Activated CD4-positive, alpha-beta T cell treated with anti-CD3 and anti-CD28 coated beads for 36 hours (primary cell): ENCODE measurements at regions of chr4 and their contacts with region 1.

Region 1: DNA sequence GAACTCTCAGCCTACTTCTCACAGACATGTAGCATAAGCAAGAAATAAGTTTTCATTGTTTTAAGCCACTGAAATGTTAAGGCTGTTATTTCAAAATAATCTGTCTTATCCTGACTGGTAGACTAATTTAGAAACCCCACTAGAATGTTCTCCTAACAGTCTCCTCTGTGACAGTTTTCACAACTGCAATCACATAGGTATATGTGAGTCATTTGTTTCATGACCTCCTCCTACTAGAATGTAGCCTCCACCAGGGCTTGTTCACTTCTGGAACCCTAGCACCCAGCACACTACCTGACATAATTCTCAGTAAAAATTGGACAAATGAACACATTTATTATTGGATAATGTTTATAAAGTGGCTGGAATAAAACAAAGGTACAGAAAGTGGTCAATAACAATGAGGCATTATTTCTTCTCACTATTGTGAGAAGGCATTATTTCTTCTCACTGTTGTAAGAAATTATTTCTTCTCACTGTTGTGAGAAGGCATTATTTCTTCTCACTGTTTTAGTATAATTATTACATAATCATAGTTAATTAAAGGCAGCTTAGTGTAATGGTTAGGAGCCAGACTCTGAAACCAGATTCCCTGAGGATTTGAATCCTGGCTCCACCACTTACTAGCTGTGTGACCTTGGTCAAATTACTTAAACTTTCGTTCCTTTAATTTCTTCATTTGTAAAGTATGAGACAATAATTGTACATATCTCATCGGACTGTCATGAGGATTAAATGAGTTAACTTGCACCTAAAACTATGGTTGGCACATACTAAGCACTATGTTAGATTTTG is 251.5 kb downstream of the RASL11B start:
- DNase-seq: peak; percentile 38
- ATAC-seq: peak; percentile 99
- H3K4me3 Mint-ChIP-seq: no peak overlapping the region
- H3K27ac Mint-ChIP-seq: peak overlapping the region; percentile 91
- H3K4me1 Mint-ChIP-seq: peaks cover 33% of the 10 kb centered on the region
- H3K27me3 Mint-ChIP-seq: no peaks in the 10 kb centered on the region

Region 2: DNA sequence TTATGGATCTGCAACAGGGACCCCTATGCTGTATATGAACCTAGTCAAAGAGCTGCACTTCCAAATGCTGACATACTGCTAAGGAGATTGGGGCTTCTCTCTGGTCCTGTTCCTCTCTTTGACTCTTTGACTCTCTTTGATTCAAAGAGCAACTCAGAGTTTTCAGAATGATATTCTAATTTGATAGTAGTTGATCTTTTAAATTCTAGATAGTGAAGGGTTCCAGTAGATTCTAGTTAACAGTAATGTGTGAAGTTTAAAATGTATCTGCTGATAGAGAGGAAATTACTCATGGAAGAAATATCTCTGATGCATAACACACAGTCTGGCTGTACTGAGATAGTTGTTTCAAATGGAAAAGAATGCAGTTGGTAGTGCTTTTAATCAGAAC is 12.4 kb before region 1 on chr4:
- CTCF ChIA-PET with region 1: no interaction called
- POLR2A ChIA-PET with region 1: no interaction called
- intact Hi-C with region 1: loop called in 1 of 2 experiments (anchors 1 kb)
- DNase-seq: no peak
- ATAC-seq: peak; percentile 95
- H3K4me3 Mint-ChIP-seq: no peak overlapping the region
- H3K27ac Mint-ChIP-seq: peak overlapping the region; percentile 74
- H3K4me1 Mint-ChIP-seq: peaks cover 22% of the 10 kb centered on the region
- H3K27me3 Mint-ChIP-seq: no peaks in the 10 kb centered on the region

Region 3: DNA sequence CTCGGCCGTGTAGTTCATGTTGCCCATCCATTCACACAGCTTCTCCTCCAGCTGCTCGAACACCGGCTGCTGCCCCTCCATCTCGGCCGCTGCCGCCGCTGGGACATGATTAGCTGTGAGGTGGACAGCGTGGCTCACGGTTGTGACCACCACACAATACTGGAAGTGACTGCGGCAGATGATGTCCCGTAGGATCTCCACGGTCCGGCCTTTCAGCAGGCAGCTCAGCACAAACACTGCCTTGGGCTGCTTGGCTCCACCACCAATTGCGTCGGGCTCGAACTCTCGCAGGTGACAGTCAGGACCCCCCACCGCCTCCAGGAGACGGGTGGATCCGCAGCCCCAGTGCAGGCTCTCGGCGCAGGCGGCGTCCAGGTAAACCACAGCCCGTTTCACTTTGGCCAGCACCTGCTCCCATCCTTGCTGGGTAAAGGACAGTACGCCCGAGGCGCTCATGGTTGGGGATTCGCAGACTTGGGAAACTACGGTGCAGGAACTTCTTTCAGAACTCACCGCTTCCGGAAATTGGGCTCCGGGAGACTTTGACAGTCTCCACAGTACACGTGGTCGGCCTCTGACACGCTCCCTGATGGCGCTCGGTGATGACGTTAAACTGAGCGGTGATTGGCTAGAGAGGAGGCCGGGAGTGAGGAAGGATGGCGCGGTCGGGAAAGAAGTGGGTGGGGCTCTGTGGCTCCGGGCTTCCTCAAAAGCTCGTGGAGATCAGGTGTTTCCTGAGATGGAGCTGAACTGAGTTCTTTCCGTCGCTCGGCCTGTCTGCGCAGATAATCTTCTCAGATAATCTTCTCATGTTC is 252.1 kb after region 1 on chr4 and contains the start of gene SCFD2:
- CTCF ChIA-PET with region 1: no interaction called
- POLR2A ChIA-PET with region 1: no interaction called
- intact Hi-C with region 1: loop called in 1 of 2 experiments (anchors 5 kb)
- DNase-seq: peak; percentile 98
- ATAC-seq: peak; percentile 98
- H3K4me3 Mint-ChIP-seq: peak within 1 kb of the TSS; percentile 95
- H3K27ac Mint-ChIP-seq: peak within 1 kb of the TSS; percentile 95
- H3K4me1 Mint-ChIP-seq: peaks cover 47% of the 10 kb centered on the region
- H3K27me3 Mint-ChIP-seq: peaks cover 5% of the 10 kb centered on the region
- total RNA-seq, gene SCFD2: 21.6 to 22.5 TPM

Region 4: GRCh38 chr4:53656421-53657046 is 542.9 kb after region 1 on chr4:
- CTCF ChIA-PET with region 1: no interaction called
- POLR2A ChIA-PET with region 1: no interaction called
- intact Hi-C with region 1: no loop called
- DNase-seq: no peak
- ATAC-seq: no peak
- H3K4me3 Mint-ChIP-seq: no peak overlapping the region
- H3K27ac Mint-ChIP-seq: no peak overlapping the region
- H3K4me1 Mint-ChIP-seq: no peaks in the 10 kb centered on the region
- H3K27me3 Mint-ChIP-seq: peaks cover 11% of the 10 kb centered on the region